GM10248 (cell line): ENCODE measurements at regions of chr17 and their contacts with region 1.

Region 1: GRCh38 chr17:31388770-31389661 is 2.5 kb upstream of the RAB11FIP4 start:
- DNase-seq: peak; percentile 66
- CTCF ChIP-seq: peak; percentile 71

Region 2: GRCh38 chr17:31171701-31172100 is 217.3 kb before region 1 on chr17:
- CTCF ChIA-PET with region 1: no interaction called
- POLR2A ChIA-PET with region 1: no interaction called
- DNase-seq: no peak
- CTCF ChIP-seq: no peak

Region 3: GRCh38 chr17:31378638-31379037 is 10.4 kb before region 1 on chr17:
- CTCF ChIA-PET with region 1: interaction called, 17 read pairs
- POLR2A ChIA-PET with region 1: no interaction called
- DNase-seq: no peak
- CTCF ChIP-seq: no peak

Region 4: GRCh38 chr17:31404028-31404954 is 15.3 kb after region 1 on chr17:
- CTCF ChIA-PET with region 1: interaction called, 10 read pairs
- POLR2A ChIA-PET with region 1: no interaction called
- DNase-seq: peak; percentile 15
- CTCF ChIP-seq: no peak

Region 5: GRCh38 chr17:31524926-31525800 is 136.1 kb after region 1 on chr17:
- CTCF ChIA-PET with region 1: interaction called, 23 read pairs
- POLR2A ChIA-PET with region 1: no interaction called
- DNase-seq: peak; percentile 88
- CTCF ChIP-seq: peak; percentile 90